PC-9 (cell line): ENCODE measurements at regions of chr1 and their contacts with region 1.

Region 1: DNA sequence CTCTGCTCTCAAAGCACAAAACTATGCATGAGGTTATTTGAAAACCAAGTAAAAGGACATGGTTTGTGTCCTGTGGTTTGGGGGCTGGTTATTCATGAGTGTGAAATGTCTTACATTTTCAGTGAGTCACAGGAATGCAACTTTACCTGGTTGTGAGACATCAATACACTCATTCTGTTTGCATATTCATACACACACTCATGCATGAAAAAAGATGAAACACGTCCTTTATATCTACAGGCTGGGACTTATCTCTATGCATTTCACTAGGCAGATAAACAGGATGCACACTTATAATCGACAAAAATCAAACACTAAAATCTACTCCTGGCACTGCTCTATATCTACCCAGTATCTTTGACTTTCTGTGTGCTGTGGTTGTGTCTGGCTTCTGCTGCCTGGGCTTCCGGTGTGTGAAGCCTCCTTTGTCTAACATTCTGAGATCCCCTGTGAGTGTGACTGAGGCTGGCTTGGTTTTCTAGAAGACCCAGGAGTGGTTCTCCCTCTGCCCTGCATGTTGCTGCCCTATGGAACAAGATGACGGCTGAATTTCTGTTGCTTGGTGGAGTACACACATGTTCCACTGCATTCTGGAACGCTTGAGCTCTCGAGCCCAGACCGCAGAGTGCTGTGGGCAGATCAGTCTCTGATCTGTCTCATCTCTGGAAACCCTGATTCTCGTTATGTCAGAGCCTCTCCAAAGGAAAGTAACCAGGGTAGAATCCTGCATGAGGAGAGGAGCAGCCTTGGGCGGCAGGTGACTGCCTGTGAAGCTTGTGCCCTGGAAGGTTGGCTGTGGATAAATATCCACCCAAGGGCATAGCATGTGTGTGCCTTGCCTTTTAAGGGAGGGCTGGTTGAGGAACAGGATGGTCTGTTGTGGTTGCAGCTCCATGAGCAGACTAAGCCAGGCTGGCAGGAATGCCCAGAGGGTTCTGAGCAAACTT is 19.7 kb upstream of the FASLG start:
- DNase-seq: peak; percentile 55 to 98
- H3K4me3 ChIP-seq: peak overlapping the region; percentile 3; the same call in 1 of the 2 replicates
- H3K27ac ChIP-seq: peak overlapping the region; percentile 87
- H3K4me1 ChIP-seq: peaks cover 44% of the 10 kb centered on the region
- H3K27me3 ChIP-seq: no peaks in the 10 kb centered on the region
- CTCF ChIP-seq: no peak

Region 2: DNA sequence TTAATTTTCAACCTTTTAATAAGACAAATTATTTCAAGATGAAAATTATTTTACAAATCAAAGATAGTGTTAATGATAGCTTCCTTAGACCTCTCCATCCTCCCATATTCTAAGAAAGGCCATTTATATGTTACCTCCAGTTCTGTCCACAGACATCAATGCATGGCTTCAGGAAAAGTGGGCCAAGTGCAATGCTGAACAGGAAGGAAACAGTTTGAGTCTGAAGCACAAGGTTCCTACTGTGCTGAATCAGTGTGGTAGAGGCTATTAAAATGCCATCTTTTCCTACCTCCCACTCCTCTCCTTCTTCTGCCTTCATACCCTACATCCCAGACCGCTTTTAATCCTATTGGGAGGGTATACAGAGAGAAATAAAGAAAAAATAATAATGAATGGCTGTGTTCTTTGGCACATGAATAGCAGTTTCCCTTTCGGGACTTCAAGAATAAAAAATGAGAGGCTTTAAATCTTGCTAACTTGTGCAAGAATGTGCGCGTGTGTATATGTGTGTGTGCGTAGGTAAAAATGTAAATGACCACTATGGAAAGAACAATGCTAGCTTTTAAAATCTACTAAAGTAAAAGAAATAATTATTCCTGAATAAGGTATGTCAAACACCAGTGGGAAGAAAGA is 281.3 kb before region 1 on chr1:
- CTCF ChIA-PET with region 1: no interaction called
- POLR2A ChIA-PET with region 1: no interaction called
- intact Hi-C with region 1: loop called (anchors 10 kb)
- DNase-seq: no peak
- H3K4me3 ChIP-seq: no peak overlapping the region
- H3K27ac ChIP-seq: peak overlapping the region; percentile 72
- H3K4me1 ChIP-seq: peaks cover 60% of the 10 kb centered on the region
- H3K27me3 ChIP-seq: no peaks in the 10 kb centered on the region
- CTCF ChIP-seq: no peak

Region 3: GRCh38 chr1:172449585-172450534 is 189.3 kb before region 1 on chr1:
- CTCF ChIA-PET with region 1: no interaction called
- POLR2A ChIA-PET with region 1: no interaction called
- intact Hi-C with region 1: loop called (anchors 2 kb)
- DNase-seq: peak; percentile 42 to 52
- H3K4me3 ChIP-seq: peak overlapping the region; percentile 38; the same call in 1 of the 2 replicates
- H3K27ac ChIP-seq: peak overlapping the region; percentile 91
- H3K4me1 ChIP-seq: peaks cover 67% of the 10 kb centered on the region
- H3K27me3 ChIP-seq: no peaks in the 10 kb centered on the region
- CTCF ChIP-seq: peak; percentile 76

Region 4: DNA sequence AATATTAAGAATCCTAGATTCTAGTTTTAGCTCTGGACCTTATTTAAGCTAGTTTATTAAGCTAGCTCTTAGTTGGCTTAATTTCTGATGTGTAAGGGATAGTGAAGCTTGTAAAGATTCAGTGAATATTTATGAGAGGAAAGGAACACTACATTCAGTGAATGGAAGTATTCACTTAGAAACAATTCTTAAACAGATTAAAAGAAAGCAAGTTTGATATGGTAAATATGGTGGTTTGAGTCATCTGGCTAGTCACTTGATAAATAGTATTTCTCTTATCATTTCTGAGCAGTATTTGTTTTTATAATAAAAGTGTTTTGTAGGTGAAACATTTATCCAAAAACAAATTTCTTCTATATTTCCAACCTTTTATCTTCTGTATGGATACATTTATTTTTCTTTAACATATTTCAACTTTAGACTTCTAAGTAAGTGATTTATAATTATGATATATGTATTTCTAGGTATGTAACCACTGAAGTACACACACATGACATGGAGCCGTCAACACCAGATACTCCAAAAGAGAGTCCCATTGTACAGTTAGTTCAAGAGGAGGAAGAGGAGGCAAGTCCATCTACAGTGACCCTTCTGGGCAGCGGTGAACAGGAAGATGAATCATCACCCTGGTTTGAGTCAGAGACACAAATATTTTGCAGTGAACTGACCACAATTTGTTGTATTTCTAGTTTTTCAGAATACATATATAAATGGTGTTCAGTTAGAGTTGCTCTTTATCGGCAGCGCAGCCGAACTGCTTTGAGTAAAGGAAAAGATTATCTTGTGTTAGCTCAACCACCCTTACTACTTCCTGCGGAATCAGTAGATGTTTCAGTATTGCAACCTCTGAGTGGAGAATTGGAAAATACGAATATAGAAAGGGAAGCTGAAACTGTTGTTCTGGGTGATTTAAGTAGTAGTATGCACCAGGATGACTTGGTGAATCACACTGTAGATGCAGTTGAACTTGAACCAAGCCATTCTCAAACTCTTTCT is 50.6 kb before region 1 on chr1:
- CTCF ChIA-PET with region 1: no interaction called
- POLR2A ChIA-PET with region 1: no interaction called
- intact Hi-C with region 1: loop called (anchors 5 kb)
- DNase-seq: peak; percentile 58 to 90
- H3K4me3 ChIP-seq: peak overlapping the region; percentile 35
- H3K27ac ChIP-seq: peak overlapping the region; percentile 78
- H3K4me1 ChIP-seq: peaks cover 44% of the 10 kb centered on the region
- H3K27me3 ChIP-seq: no peaks in the 10 kb centered on the region
- CTCF ChIP-seq: no peak

Region 5: DNA sequence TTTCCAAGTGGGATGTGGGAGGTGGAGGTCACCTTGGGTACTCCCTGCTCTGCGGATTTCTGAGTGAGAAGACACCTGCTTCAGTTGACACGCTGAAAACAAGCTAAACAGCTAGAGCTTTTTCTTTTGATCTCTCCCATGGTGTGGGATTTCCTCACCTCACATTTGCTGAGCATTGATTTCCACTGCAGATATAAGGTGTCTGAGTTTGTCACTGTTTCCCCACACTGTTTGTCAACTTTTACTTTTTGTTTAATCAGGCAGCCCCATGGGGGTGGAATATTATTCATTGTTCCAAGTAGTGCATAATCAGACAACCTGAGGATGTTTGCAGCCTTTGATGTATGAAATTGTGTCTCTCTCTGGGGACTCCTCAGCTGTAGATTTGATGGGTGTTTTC is 69.3 kb after region 1 on chr1:
- CTCF ChIA-PET with region 1: no interaction called
- POLR2A ChIA-PET with region 1: no interaction called
- intact Hi-C with region 1: no loop called
- DNase-seq: no peak
- H3K4me3 ChIP-seq: no peak overlapping the region
- H3K27ac ChIP-seq: no peak overlapping the region
- H3K4me1 ChIP-seq: no peaks in the 10 kb centered on the region
- H3K27me3 ChIP-seq: no peaks in the 10 kb centered on the region
- CTCF ChIP-seq: no peak

Region 6: DNA sequence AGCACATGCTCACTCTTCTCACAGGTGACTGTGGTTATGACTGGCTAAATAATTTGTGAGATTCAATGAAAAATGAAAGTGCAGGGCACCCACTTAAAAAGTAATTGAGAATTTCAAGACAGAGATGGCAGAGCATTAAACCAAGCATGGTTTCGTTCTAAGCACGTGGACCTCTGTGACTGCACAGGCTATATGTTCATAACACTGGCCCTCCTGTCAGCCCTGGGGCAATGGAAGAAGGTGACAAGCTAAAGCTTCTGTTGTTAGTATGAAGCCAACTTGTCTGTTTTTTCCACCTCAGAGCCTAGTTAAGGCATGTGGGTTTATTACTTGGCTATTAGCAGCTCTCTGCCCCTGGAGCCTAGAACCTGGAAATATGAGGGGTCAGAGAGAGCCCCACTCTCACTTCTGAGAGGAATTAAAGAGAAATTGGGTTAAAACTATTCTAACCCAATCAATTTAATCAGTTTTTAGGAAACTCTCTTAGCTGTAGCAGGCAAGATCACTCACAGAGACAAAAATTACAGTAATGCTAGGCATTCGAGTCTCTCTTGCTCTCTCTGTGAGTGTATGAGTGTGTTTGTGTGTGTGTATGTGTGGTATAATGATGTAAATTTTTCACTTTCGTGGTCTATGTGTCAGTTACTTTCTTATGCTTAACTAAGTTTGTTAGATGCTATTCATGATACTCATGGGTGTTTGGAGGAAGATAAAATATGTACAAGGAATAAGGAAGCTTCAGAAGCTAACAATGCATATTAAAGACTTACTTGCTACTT is 150.9 kb after region 1 on chr1:
- CTCF ChIA-PET with region 1: no interaction called
- POLR2A ChIA-PET with region 1: no interaction called
- intact Hi-C with region 1: no loop called
- DNase-seq: no peak
- H3K4me3 ChIP-seq: no peak overlapping the region
- H3K27ac ChIP-seq: no peak overlapping the region
- H3K4me1 ChIP-seq: no peaks in the 10 kb centered on the region
- H3K27me3 ChIP-seq: no peaks in the 10 kb centered on the region
- CTCF ChIP-seq: no peak